HEK293 (cell line): ENCODE measurements at regions of chr19 and their contacts with region 1.

Region 1: GRCh38 chr19:10580979-10581631 is 6.0 kb downstream of the AP1M2 start:
- H3K4me3 ChIP-seq: no peak overlapping the region
- H3K27ac ChIP-seq: no peak overlapping the region
- H3K4me1 ChIP-seq: no peaks in the 10 kb centered on the region
- CTCF ChIP-seq: peak; percentile 94

Region 2: GRCh38 chr19:10533646-10534386 is 47.3 kb before region 1 on chr19:
- CTCF ChIA-PET with region 1: no interaction called
- POLR2A ChIA-PET with region 1: no interaction called
- H3K4me3 ChIP-seq: no peak overlapping the region
- H3K27ac ChIP-seq: no peak overlapping the region
- H3K4me1 ChIP-seq: no peaks in the 10 kb centered on the region
- CTCF ChIP-seq: no peak

Region 3: DNA sequence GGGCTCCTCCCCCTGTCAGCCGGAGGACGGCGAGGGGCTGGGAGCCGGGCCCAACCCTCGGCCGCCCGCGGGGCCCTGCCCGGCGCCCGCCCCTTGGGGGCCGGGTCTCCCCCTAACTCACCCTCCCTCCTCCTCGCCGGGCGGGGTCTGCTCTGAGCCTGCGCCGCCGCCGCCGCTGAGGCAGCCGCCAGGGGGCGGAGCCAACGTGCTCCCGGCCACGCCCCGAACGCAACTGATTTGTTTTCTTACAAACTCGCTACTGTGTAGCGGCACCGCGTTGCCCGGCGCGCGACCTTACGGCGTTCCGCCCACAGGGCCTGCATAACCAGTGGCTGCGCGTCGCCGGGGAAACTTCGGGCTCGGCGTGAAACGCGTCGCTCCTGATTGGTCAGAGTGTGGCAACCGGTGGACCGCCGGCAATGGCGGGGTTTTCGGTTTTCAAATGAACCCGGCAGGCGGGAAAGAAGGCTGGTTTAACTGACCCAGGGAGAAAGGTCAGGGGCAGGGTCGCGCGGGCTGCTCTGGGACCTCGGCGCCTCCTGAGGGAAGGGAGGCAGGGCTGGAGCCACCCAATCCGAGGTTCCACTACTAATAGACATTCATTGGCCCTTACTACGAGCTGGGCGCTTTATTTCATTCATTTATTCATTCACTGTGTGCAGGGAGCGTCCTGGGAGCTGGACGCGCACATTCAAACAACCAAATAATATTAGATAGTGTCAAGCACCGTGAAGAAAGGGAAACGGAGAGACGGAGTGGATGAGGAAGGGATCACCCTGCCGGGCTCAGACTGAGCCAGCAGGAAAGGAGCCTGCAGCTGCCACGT is 12.1 kb before region 1 on chr19 and contains the start of gene CDKN2D:
- CTCF ChIA-PET with region 1: interaction called, 28 read pairs
- POLR2A ChIA-PET with region 1: interaction called, 3 read pairs
- H3K4me3 ChIP-seq: peak within 1 kb of the TSS; percentile 44
- H3K27ac ChIP-seq: peak within 1 kb of the TSS; percentile 75
- H3K4me1 ChIP-seq: peaks cover 13% of the 10 kb centered on the region
- CTCF ChIP-seq: no peak; the same call in 1 of the 2 replicates

Region 4: GRCh38 chr19:10612491-10613119 is 31.5 kb after region 1 on chr19:
- CTCF ChIA-PET with region 1: interaction called, 13 read pairs
- POLR2A ChIA-PET with region 1: no interaction called
- H3K4me3 ChIP-seq: no peak overlapping the region
- H3K27ac ChIP-seq: no peak overlapping the region
- H3K4me1 ChIP-seq: no peaks in the 10 kb centered on the region
- CTCF ChIP-seq: no peak

Region 5: DNA sequence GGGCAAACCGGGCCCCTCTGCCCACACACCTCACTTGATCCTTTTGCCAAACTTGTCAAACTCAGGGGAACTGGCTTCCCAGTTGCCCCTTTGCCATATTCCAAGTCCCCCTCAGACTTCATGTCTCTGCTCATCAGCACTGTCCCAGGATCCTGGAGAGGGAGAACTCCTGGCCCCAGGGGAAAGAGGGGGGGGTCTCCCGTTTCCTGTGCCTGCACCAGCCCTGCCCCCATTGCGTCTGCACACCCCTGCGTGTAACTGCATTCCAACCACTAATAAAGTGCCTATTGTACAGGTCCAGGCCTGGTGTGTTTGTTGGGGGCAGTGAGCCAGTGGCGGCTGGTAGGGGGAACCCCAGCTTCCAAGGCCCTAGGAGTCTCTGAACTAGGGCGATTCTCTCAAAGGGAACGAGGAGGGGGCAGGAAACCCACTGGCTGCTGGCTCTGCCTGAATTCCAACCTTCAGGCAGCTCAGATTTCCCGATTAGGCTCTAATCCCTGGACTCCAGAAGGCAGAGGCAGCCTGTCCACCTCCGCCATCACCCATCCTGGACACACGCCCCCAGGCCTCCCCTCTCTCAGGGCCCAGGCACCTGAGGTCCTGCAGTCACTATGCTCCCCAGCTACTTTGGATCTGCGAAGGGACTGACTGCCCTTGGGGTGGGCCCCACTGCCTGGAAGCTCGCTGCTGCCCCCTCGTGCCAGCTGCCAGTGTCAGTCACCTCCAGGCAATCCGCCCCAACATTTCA is 63.3 kb after region 1 on chr19:
- CTCF ChIA-PET with region 1: interaction called, 243 read pairs
- POLR2A ChIA-PET with region 1: interaction called, 13 read pairs
- H3K4me3 ChIP-seq: no peak overlapping the region
- H3K27ac ChIP-seq: no peak overlapping the region
- H3K4me1 ChIP-seq: no peaks in the 10 kb centered on the region
- CTCF ChIP-seq: peak; percentile 95

Region 6: DNA sequence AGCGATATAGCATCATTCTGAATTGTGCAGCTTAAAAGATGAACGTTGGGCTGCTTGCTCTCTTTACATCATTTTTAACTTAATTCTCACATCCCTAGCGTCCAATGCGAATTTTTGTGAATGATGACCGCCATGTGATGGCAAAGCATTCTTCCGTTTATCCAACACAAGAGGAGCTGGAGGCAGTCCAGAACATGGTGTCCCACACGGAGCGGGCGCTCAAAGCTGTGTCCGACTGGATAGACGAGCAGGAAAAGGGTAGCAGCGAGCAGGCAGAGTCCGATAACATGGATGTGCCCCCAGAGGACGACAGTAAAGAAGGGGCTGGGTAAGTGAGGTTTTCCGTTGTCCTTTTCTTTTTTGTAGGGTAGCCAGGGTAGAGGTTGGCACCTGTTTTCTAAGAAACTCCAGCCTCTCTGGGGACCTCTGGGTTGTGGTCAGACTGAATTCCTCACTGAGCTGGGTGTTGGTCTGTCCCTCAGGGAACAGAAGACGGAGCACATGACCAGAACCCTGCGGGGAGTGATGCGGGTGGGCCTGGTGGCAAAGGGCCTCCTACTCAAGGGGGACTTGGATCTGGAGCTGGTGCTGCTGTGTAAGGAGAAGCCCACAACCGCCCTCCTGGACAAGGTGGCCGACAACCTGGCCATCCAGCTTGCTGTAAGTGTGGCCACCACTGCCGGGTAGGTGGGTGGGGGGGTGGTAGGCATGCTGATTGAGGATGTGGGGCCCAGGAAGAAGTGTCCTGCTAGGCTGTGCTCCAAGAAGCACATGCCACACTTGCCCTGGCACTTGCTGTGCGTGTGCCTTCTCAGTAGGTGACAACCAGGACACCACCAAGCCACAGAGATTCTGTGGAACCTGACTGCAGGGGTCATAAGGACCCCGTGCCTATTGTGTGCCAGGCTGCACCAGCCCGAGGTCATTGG is 90.0 kb after region 1 on chr19:
- CTCF ChIA-PET with region 1: interaction called, 12 read pairs
- POLR2A ChIA-PET with region 1: no interaction called
- H3K4me3 ChIP-seq: no peak overlapping the region
- H3K27ac ChIP-seq: no peak overlapping the region
- H3K4me1 ChIP-seq: peaks cover 1% of the 10 kb centered on the region; the same call in 1 of the 2 replicates
- CTCF ChIP-seq: no peak